Tibial artery (tissue), 4 donors: ENCODE measurements at regions of chr1 and their contacts with region 1.

Region 1: GRCh38 chr1:170664828-170665612 is 1.1 kb downstream of the PRRX1 start:
- DNase-seq: peak in 1 of 2 donors; percentile 83
- H3K4me3 ChIP-seq: peak overlapping the region; percentile 79 to 90
- H3K27ac ChIP-seq: peak overlapping the region; percentile 95 to 99
- H3K4me1 ChIP-seq: peaks cover 0 to 26% (median 18%) of the 10 kb centered on the region in 4 donors
- H3K27me3 ChIP-seq: no peaks in the 10 kb centered on the region
- CTCF ChIP-seq: peak; percentile 16 to 25

Region 2: DNA sequence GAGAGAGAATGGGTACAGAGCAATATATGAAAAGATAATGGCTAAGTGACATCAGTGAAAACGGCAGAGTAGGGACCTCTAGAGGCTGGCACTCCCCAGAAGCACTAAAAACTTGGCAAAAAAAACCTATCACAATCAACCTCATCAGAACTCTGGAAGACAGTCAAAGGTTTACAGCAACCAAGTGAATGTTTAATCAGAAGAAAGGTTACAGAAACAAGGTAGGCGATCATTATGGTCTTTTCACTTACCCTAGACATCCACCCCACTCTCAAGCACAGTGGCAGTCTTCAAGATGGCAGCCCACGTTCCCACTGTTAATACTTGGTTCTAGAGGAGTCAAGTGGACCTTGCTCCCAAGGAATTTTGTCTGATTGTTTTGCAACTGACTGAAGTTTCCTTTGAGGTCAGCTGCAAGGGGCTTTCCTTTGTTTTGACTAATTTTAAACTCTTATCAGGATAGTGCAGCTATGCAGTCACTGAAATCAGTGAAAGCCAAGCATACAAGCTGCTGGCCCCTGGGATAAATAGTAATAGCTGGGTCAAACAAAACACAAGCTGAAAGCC is 597.7 kb before region 1 on chr1:
- intact Hi-C with region 1: loop called (anchors 5 kb)
- DNase-seq: no peak
- H3K4me3 ChIP-seq: no peak overlapping the region
- H3K27ac ChIP-seq: peak overlapping the region in 1 of 2 donors; percentile 16
- H3K4me1 ChIP-seq: peaks cover 0 to 50% (median 12%) of the 10 kb centered on the region in 4 donors
- H3K27me3 ChIP-seq: no peaks in the 10 kb centered on the region
- CTCF ChIP-seq: no peak

Region 3: GRCh38 chr1:170402476-170403311 is 262.3 kb before region 1 on chr1:
- intact Hi-C with region 1: loop called (anchors 10 kb)
- DNase-seq: no peak
- H3K4me3 ChIP-seq: no peak overlapping the region
- H3K27ac ChIP-seq: peak overlapping the region in 1 of 2 donors; percentile 19
- H3K4me1 ChIP-seq: peaks cover 0 to 21% (median 2%) of the 10 kb centered on the region in 4 donors
- H3K27me3 ChIP-seq: no peaks in the 10 kb centered on the region
- CTCF ChIP-seq: no peak

Region 4: GRCh38 chr1:170531758-170532657 is 133.0 kb before region 1 on chr1 and contains the start of gene GORAB:
- intact Hi-C with region 1: loop called (anchors 5 kb)
- DNase-seq: peak; percentile 94 to 96
- H3K4me3 ChIP-seq: peak within 1 kb of the TSS; percentile 65 to 75
- H3K27ac ChIP-seq: peak within 1 kb of the TSS; percentile 94 to 96
- H3K4me1 ChIP-seq: peaks cover 0 to 38% (median 16%) of the 10 kb centered on the region in 4 donors
- H3K27me3 ChIP-seq: no peaks in the 10 kb centered on the region
- CTCF ChIP-seq: no peak

Region 5: GRCh38 chr1:170593173-170594011 is 71.6 kb before region 1 on chr1:
- intact Hi-C with region 1: loop called (anchors 5 kb)
- DNase-seq: no peak
- H3K4me3 ChIP-seq: peak overlapping the region; percentile 17 to 34
- H3K27ac ChIP-seq: peak overlapping the region; percentile 59 to 65
- H3K4me1 ChIP-seq: peaks cover 0 to 26% (median 8%) of the 10 kb centered on the region in 4 donors
- H3K27me3 ChIP-seq: no peaks in the 10 kb centered on the region
- CTCF ChIP-seq: no peak

Region 6: DNA sequence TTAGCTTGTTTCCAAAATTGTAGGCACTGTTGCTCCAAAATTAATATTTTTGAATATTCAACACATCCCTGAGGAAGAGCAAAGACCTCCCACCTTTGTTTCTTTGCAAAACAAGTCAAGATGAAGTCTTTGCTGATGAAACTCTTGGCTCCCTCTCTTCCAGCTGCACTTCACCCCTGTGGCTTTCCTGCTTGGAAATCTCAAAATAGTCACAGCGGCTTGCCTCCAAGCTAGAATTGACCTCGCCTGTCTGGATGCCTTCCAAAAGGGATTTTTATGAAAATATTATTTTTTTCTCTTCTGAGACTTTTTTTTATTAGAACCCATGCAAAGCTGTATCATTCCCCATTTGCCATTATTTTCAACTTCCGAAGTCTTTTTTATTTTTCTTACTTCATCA is 199.2 kb after region 1 on chr1:
- intact Hi-C with region 1: no loop called
- DNase-seq: peak; percentile 31 to 69
- H3K4me3 ChIP-seq: no peak overlapping the region
- H3K27ac ChIP-seq: peak overlapping the region; percentile 31 to 48
- H3K4me1 ChIP-seq: peaks cover 0 to 25% (median 9%) of the 10 kb centered on the region in 4 donors
- H3K27me3 ChIP-seq: no peaks in the 10 kb centered on the region
- CTCF ChIP-seq: no peak

Region 7: GRCh38 chr1:170881268-170882265 is 216.5 kb after region 1 on chr1:
- intact Hi-C with region 1: loop called (anchors 10 kb)
- DNase-seq: no peak
- H3K4me3 ChIP-seq: peak overlapping the region; percentile 17 to 19
- H3K27ac ChIP-seq: no peak overlapping the region
- H3K4me1 ChIP-seq: peaks cover 0 to 21% (median 3%) of the 10 kb centered on the region in 4 donors
- H3K27me3 ChIP-seq: no peaks in the 10 kb centered on the region
- CTCF ChIP-seq: peak; percentile 59 to 67